Heart left ventricle (tissue), 16 donors: ENCODE measurements at regions of chr2 and their contacts with region 1.

Region 1: DNA sequence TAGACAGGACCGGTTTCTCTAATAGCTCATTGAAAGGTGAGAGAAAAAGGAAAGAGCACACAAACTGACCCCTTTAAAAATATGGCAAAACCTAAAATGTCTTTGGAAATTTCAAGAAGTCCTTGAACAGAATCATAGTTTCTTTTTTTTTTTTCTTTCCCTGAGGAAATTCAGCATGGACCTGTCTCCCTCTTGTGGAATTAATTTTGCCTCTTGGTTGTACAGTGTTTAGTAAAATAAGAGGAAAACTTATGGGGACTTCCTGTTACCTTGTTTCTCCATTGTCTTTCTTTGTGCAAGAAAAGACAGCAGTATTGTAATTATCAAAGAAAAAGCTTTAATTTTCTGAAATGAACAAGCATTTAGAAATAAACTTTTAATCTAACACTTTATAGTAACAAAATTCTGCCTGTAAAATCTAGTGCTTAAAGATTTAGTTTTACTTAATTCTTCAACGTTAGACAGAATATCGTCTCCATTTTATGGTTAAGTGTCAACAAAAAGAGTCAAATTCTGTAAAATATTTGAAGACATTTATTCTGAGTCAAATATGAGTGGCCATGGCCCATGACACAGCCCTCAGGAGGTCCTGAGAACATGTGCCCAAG is 176.3 kb upstream of the NABP1 start:
- DNase-seq: no peak
- ATAC-seq: peak in 3 of 4 donors; percentile 38 to 75 (median 68)
- H3K4me3 ChIP-seq: no peak overlapping the region
- H3K27ac ChIP-seq: peak overlapping the region in 7 of 12 donors; percentile 19 to 74 (median 47)
- H3K4me1 ChIP-seq: peaks cover 0 to 24% (median 13%) of the 10 kb centered on the region in 12 donors
- H3K27me3 ChIP-seq: no peaks in the 10 kb centered on the region
- CTCF ChIP-seq: peak; percentile 52 to 83 (median 68)
- POLR2A ChIP-seq: no peak

Region 2: DNA sequence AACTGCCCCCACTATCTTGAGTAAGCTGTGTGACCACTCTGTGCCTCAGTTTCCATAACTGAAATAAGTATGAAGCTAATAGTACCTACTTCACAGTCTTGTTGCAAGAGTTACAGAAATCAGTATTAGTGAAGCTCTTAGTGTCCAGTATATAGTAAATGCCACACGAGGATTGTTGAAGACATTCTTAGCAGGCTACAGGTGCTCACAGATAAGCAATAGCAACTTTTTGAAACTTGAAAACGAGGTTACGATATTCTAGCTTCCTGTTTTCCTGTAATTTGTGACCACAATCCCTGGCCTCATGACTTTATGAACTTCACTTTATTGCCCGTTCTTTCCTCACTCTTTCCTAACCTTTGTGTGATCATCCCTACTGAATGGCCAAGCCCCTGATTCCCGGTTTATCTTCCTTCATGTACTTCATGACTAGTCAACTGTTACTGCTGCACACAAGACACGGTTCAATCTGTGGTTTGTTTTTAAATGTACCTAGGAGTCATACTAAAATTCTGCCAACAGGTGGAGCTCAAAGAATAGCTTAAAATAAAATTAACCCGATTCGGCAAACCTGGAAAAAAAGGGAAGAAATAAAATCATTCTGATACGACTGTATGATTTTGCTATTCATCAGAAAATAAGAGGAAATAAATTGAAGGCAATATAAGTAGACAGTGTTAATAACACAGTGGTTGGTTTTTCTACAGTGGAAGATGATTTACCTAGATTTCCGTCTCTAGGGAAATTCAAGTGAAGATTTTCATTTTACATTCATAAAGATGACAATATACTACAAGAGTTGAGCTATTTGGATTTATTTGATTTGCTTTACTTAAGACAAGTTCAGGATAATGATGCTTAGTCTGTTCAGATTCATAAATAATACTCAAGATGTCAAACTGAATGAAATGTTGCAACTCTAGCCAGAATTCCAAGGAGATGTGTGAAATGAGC is 449.6 kb before region 1 on chr2:
- intact Hi-C with region 1: loop called in 1 of 10 experiments (anchors 5 kb)
- DNase-seq: no peak
- ATAC-seq: peak in 2 of 4 donors; percentile 18 to 45
- H3K4me3 ChIP-seq: no peak overlapping the region
- H3K27ac ChIP-seq: peak overlapping the region in 1 of 12 donors; percentile 10
- H3K4me1 ChIP-seq: peaks cover 0 to 37% (median 0%) of the 10 kb centered on the region in 12 donors
- H3K27me3 ChIP-seq: peaks cover 0 to 5% (median 0%) of the 10 kb centered on the region in 9 donors
- CTCF ChIP-seq: peak; percentile 38 to 68 (median 54)
- POLR2A ChIP-seq: no peak

Region 3: GRCh38 chr2:191218292-191218898 is 283.3 kb before region 1 on chr2:
- intact Hi-C with region 1: loop called in 9 of 10 experiments (anchors 1 to 5 kb)
- DNase-seq: peak in 4 of 5 donors; percentile 35 to 40 (median 40)
- ATAC-seq: peak in 3 of 4 donors; percentile 60 to 79 (median 66)
- H3K4me3 ChIP-seq: no peak overlapping the region
- H3K27ac ChIP-seq: peak overlapping the region in 2 of 12 donors; percentile 2 to 5
- H3K4me1 ChIP-seq: peaks cover 0 to 32% (median 7%) of the 10 kb centered on the region in 12 donors
- H3K27me3 ChIP-seq: no peaks in the 10 kb centered on the region
- CTCF ChIP-seq: peak; percentile 54 to 77 (median 61)
- POLR2A ChIP-seq: no peak

Region 4: GRCh38 chr2:191231995-191232394 is 269.7 kb before region 1 on chr2:
- intact Hi-C with region 1: loop called in 8 of 10 experiments (anchors 5 kb)
- DNase-seq: no peak
- ATAC-seq: peak in 2 of 4 donors; percentile 21 to 30
- H3K4me3 ChIP-seq: no peak overlapping the region
- H3K27ac ChIP-seq: peak overlapping the region in 10 of 12 donors; percentile 2 to 77 (median 63)
- H3K4me1 ChIP-seq: peaks cover 0 to 32% (median 7%) of the 10 kb centered on the region in 12 donors
- H3K27me3 ChIP-seq: no peaks in the 10 kb centered on the region
- CTCF ChIP-seq: peak; percentile 18 to 66 (median 45)
- POLR2A ChIP-seq: no peak

Region 5: GRCh38 chr2:191376981-191377629 is 124.6 kb before region 1 on chr2:
- intact Hi-C with region 1: loop called in 1 of 10 experiments (anchors 5 kb)
- DNase-seq: peak in 4 of 5 donors; percentile 61 to 79 (median 71)
- ATAC-seq: peak; percentile 92 to 99 (median 96)
- H3K4me3 ChIP-seq: no peak overlapping the region
- H3K27ac ChIP-seq: peak overlapping the region in 10 of 12 donors; percentile 11 to 65 (median 46)
- H3K4me1 ChIP-seq: peaks cover 0 to 19% (median 14%) of the 10 kb centered on the region in 12 donors
- H3K27me3 ChIP-seq: no peaks in the 10 kb centered on the region
- CTCF ChIP-seq: no peak
- POLR2A ChIP-seq: no peak

Region 6: GRCh38 chr2:191410646-191411436 is 90.8 kb before region 1 on chr2:
- intact Hi-C with region 1: loop called in 1 of 10 experiments (anchors 10 kb)
- DNase-seq: no peak
- ATAC-seq: no peak
- H3K4me3 ChIP-seq: no peak overlapping the region
- H3K27ac ChIP-seq: peak overlapping the region in 1 of 12 donors; percentile 3
- H3K4me1 ChIP-seq: peaks cover 0 to 14% (median 0%) of the 10 kb centered on the region in 12 donors
- H3K27me3 ChIP-seq: no peaks in the 10 kb centered on the region
- CTCF ChIP-seq: no peak
- POLR2A ChIP-seq: no peak